K562 (cell line): ENCODE measurements at regions of chr14 and their contacts with region 1.

Region 1: DNA sequence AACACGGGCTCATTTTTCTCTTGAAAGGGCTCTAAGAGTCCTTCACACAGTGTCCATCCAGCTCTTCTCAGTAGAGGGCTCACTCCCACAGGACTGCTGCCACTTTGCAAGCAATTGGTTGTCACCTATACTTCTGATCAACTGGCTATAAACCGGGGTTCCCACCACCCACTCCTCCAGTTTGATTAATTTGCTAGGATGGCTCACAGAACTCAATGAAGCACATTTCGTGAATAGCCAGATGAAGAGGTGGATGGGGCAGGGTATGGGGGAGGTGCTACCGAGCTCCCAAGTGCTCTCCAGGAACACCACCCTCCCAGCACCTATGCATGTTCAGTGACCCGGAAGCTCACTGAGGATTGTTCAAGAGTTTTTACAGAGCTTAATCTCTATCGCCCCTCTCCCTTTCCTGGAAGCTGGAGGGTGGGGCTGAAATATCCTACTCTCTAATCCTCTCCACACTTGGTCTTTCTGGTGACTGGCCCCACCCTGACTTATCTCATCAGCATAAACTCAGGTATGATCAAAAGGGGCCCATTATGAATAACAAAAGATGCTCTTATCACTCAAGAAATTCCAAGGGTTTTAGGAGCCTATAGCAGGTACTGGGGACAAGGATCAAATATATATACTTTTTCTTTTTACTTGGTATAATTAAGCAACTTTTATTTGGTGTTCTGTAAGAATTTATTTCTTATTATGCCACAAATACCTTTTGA is 13.9 kb upstream of the EGLN3 start:
- DNase-seq: peak; percentile 35 to 85 (median 48)
- ATAC-seq: peak; percentile 90
- H3K4me3 ChIP-seq: no peak overlapping the region
- H3K27ac ChIP-seq: peak overlapping the region; percentile 50
- H3K4me1 ChIP-seq: peaks cover 10 to 38% of the 10 kb centered on the region in 2 experiments; a peak in 4 of 5 replicates
- H3K27me3 ChIP-seq: no peaks in the 10 kb centered on the region
- CTCF ChIP-seq: peak in 2 of 3 experiments; percentile 39 to 47; a peak in 2 of 6 replicates
- EP300 ChIP-seq: no peak
- POLR2A ChIP-seq: no peak
- RAD21 ChIP-seq: peak; percentile 45 to 63

Region 2: DNA sequence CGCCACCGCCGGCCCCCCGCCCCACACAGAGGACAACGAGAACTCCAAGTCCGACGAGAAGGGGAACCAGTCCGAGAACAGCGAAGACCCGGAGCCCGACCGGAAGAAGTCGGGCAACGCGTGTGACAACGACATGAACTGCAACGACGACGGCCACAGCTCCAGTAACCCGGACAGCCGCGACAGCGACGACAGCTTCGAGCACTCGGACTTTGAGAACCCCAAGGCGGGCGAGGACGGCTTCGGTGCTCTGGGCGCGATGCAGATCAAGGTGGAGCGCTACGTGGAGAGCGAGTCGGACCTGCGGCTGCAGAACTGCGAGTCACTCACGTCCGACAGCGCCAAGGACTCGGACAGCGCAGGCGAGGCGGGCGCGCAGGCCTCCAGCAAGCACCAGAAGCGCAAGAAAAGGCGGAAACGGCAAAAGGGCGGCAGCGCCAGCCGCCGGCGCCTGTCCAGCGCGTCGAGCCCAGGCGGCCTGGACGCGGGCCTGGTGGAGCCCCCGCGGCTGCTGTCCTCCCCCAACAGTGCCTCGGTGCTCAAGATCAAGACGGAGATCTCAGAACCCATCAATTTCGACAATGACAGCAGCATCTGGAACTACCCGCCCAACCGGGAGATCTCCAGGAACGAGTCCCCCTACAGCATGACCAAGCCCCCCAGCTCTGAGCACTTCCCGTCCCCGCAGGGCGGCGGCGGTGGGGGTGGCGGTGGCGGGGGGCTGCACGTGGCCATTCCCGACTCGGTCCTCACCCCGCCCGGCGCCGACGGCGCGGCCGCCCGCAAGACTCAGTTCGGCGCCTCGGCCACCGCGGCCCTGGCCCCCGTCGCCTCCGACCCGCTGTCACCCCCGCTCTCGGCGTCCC is 164.8 kb before region 1 on chr14:
- CTCF ChIA-PET with region 1: no interaction called
- POLR2A ChIA-PET with region 1: no interaction called
- in situ Hi-C with region 1: no loop called
- intact Hi-C with region 1: no loop called
- DNase-seq: no peak
- ATAC-seq: no peak
- H3K4me3 ChIP-seq: no peak overlapping the region
- H3K27ac ChIP-seq: no peak overlapping the region
- H3K4me1 ChIP-seq: no peaks in the 10 kb centered on the region; a peak in 1 of 5 replicates
- H3K27me3 ChIP-seq: no peaks in the 10 kb centered on the region
- CTCF ChIP-seq: no peak
- EP300 ChIP-seq: no peak
- POLR2A ChIP-seq: no peak
- RAD21 ChIP-seq: no peak

Region 3: GRCh38 chr14:33950320-33951182 is 14.2 kb before region 1 on chr14 and contains the start of gene EGLN3:
- CTCF ChIA-PET with region 1: no interaction called
- POLR2A ChIA-PET with region 1: interaction called, 10 read pairs
- in situ Hi-C with region 1: no loop called
- intact Hi-C with region 1: no loop called
- DNase-seq: peak; percentile 85 to 90 (median 88)
- ATAC-seq: peak; percentile 95
- H3K4me3 ChIP-seq: peak within 1 kb of the TSS; percentile 60
- H3K27ac ChIP-seq: peak within 1 kb of the TSS; percentile 68
- H3K4me1 ChIP-seq: peaks cover 9 to 13% of the 10 kb centered on the region in 2 experiments; a peak in 4 of 5 replicates
- H3K27me3 ChIP-seq: no peaks in the 10 kb centered on the region
- CTCF ChIP-seq: no peak
- EP300 ChIP-seq: no peak
- POLR2A ChIP-seq: peak; percentile 97
- RAD21 ChIP-seq: 0 out of 4 replicates have a peak, but pooled peaks of 1 of the 2 experiments have one; percentile 8
- polyA plus RNA-seq, gene EGLN3: 2.5 to 3.0 TPM